B cell (primary cell): ENCODE measurements at regions of chr11 and their contacts with region 1.

Region 1: DNA sequence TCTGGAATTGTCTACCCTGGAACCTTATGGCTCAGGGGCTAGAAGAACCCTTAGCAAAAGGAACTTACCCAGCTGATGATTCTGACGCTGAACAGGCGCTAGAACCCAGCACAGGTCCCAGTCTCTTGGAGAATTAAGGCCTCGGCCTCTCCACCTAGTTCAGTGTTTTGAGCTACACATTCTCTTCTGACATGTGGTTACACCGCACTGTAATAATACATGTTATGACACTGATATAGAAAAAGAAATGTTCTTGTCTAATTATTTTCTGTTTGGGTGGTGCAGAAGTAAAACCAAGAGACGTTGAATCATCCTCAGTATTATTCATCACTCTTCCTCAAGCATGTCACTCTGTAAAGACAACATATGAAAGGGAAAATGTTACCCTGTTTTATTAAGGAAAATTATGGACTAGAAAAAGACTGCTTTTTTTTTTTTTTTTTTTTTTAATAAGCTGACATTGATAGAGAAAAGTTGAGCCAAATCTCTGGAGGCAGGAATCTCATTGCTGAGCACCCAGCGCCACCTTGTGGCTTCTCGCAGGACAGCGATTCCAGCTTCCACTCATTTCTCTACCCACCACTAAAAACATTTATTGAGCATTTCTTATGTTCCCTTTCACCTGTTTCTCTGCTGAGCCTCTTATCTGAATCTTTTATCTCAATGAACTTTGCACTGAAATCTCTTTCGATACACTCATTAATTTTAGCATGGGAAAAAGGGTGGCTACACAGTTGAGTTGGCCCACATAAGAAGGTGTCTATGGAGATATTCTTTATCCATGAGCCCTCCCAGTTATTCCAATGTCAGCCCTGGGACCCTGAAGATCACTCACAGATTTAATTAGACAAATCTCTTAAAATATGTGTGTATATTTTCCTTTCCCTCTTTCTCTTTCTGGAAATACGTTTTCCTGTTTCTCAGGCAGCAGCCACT is 12.6 kb upstream of the APLNR start:
- DNase-seq: peak; percentile 30
- ATAC-seq: peak; percentile 31
- H3K4me3 ChIP-seq: no peak overlapping the region
- H3K4me3 Mint-ChIP-seq: no peak overlapping the region
- H3K27ac ChIP-seq: no peak overlapping the region
- H3K27ac Mint-ChIP-seq: no peak overlapping the region
- H3K4me1 ChIP-seq: peaks cover 0 to 4% of the 10 kb centered on the region in 2 donors
- H3K4me1 Mint-ChIP-seq: peaks cover 4% of the 10 kb centered on the region
- H3K27me3 ChIP-seq: peaks cover 0 to 25% (median 3%) of the 10 kb centered on the region in 4 experiments
- H3K27me3 Mint-ChIP-seq: peaks cover 31% of the 10 kb centered on the region
- CTCF ChIP-seq: peak; percentile 71

Region 2: DNA sequence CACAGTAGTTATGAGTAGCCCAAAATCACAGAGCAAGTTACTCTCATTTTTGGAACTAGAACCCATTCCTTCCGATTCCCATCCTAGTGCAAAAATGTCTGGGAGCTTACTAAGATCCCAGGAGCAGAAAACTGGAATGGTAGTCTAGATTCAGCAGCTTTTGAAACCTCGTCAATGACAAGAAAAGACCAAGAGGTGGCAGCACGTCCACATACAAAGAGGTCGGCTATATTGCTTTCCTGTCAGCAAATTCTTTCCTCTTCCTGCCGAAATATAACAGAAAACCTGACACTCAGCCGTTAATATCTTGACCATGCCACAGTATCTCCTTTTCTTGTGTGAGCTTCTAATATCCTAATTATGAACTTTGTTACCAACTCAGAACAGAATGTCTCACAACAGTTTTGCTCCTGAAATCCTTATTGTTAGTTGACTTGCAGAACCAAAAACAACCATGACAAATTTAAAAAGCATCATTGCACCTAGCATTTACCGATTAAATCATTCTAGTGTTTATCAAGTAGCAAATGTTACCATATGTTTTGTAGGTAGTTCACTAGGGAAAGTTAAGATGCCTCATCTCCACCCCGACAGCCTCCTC is 408.3 kb before region 1 on chr11:
- CTCF ChIA-PET with region 1: interaction called, 17 read pairs
- POLR2A ChIA-PET with region 1: no interaction called
- intact Hi-C with region 1: no loop called
- DNase-seq: peak; percentile 9
- ATAC-seq: no peak
- H3K4me3 ChIP-seq: no peak overlapping the region
- H3K4me3 Mint-ChIP-seq: no peak overlapping the region
- H3K27ac ChIP-seq: no peak overlapping the region
- H3K27ac Mint-ChIP-seq: no peak overlapping the region
- H3K4me1 ChIP-seq: no peaks in the 10 kb centered on the region
- H3K4me1 Mint-ChIP-seq: no peaks in the 10 kb centered on the region
- H3K27me3 ChIP-seq: no peaks in the 10 kb centered on the region
- H3K27me3 Mint-ChIP-seq: no peaks in the 10 kb centered on the region
- CTCF ChIP-seq: peak; percentile 32

Region 3: DNA sequence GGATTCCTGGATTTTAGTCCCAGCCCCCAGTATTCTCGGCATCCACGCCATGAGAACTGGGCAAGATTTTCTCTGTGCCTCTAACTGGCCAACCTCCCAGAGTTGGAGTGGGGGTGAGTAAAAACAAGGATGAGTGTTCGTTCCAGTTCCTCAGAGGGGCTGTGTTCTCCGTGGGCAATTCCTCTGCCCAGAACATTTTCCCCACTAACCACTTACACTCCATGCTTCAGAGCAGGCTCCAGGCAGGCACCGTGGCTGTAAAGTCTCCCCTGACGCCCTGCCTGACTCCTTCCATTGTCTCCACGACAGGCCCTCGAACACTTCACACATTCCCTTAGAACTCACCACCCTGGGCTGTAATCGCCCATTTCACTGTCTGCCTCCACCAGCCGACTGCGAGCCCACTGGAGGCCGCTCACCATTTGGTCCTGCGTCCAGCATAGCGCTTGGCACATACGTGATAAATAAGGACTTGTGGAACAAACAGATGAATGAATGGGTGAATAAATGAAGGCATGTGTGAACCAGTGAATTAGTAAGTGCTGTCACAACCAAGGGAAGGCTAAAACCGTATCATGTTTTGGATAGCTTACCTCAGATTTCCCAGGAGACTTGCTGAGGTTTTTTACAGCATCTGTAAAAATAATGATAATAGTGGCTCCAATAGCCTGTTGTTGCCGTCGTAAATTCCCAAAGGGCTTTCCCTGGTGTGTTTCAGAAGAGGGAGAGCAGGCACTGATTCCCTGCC is 18.7 kb before region 1 on chr11:
- CTCF ChIA-PET with region 1: no interaction called
- POLR2A ChIA-PET with region 1: no interaction called
- intact Hi-C with region 1: no loop called
- DNase-seq: no peak
- ATAC-seq: no peak
- H3K4me3 ChIP-seq: no peak overlapping the region
- H3K4me3 Mint-ChIP-seq: no peak overlapping the region
- H3K27ac ChIP-seq: no peak overlapping the region
- H3K27ac Mint-ChIP-seq: no peak overlapping the region
- H3K4me1 ChIP-seq: no peaks in the 10 kb centered on the region
- H3K4me1 Mint-ChIP-seq: no peaks in the 10 kb centered on the region
- H3K27me3 ChIP-seq: peaks cover 0 to 17% (median 8%) of the 10 kb centered on the region in 4 experiments
- H3K27me3 Mint-ChIP-seq: peaks cover 60% of the 10 kb centered on the region
- CTCF ChIP-seq: no peak